Ascending aorta (tissue), 2 donors: ENCODE measurements at regions of chr1 and their contacts with region 1.

Region 1: GRCh38 chr1:66671455-66671854 is 80.8 kb upstream of the DYNLT5 start:
- DNase-seq: no peak
- H3K4me3 ChIP-seq: no peak overlapping the region
- H3K27ac ChIP-seq: no peak overlapping the region
- H3K4me1 ChIP-seq: peaks cover 9 to 11% of the 10 kb centered on the region in 2 donors
- H3K27me3 ChIP-seq: no peaks in the 10 kb centered on the region
- CTCF ChIP-seq: no peak

Region 2: GRCh38 chr1:66607458-66607857 is 64.0 kb before region 1 on chr1:
- intact Hi-C with region 1: loop called (anchors 5 kb)
- DNase-seq: no peak
- H3K4me3 ChIP-seq: no peak overlapping the region
- H3K27ac ChIP-seq: no peak overlapping the region
- H3K4me1 ChIP-seq: no peaks in the 10 kb centered on the region
- H3K27me3 ChIP-seq: no peaks in the 10 kb centered on the region
- CTCF ChIP-seq: no peak